Right ventricle myocardium superior (tissue), 1 donor: ENCODE measurements at regions of chr19 and their contacts with region 1.

Region 1: DNA sequence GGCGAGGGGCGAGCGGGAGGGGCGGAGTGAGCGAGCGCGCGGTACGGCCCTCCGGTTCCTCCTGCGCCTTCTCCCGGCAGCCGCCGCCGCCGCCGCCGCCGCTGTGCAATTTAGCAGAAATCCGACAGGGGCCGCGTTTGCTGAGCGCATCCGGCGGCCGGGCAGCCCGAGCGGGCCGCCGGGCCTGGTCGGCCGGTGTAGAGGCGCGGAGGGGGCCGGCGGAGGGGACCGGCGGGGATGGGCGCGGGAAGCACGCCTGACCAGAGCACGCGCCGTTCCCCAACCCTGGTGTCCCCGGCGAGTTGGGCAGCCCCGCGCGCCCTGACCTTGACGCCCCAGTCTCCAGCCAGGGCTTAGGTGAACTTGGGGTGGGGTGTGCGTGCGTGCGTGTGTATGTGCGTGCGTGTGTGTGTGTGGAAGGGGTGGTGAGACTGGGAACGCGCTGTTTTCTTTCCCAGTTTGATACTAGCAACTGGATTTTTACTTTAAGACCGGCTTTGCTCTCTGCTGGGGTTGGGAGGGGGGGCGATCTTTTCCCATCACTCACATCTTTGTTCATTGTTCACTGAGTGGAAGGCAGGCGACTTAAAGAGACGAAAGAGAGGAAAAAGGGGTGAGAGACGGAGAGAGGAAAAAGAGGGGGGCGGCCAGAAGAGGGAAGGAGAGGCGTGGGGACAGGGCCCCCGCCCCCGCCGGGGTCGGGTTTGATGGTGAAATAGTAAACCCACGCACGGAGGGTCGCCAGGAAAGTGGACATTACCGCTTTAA is 144.3 kb upstream of the ZNF536 start:
- DNase-seq: peak; percentile 75
- ATAC-seq: peak; percentile 77

Region 2: DNA sequence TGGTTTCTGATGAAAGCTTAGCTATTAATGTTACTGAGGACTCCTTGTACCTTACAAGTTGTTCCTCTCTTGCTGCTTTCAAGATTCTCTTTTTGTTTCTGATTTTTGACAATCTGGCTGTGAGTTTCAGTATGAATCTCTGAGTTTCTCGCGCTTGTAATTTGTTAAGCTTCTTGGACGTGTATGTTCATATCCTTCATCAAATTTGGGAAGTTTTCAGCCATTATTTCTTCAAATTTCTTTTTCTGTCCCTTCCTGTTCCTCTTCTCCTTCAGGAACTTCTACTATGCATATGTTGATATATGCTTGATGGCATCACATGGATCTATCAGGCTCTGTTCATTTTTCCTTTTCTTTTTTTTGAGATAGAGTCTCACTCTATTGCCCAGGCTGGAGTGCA is 291.4 kb before region 1 on chr19:
- intact Hi-C with region 1: no loop called
- DNase-seq: no peak
- ATAC-seq: no peak

Region 3: DNA sequence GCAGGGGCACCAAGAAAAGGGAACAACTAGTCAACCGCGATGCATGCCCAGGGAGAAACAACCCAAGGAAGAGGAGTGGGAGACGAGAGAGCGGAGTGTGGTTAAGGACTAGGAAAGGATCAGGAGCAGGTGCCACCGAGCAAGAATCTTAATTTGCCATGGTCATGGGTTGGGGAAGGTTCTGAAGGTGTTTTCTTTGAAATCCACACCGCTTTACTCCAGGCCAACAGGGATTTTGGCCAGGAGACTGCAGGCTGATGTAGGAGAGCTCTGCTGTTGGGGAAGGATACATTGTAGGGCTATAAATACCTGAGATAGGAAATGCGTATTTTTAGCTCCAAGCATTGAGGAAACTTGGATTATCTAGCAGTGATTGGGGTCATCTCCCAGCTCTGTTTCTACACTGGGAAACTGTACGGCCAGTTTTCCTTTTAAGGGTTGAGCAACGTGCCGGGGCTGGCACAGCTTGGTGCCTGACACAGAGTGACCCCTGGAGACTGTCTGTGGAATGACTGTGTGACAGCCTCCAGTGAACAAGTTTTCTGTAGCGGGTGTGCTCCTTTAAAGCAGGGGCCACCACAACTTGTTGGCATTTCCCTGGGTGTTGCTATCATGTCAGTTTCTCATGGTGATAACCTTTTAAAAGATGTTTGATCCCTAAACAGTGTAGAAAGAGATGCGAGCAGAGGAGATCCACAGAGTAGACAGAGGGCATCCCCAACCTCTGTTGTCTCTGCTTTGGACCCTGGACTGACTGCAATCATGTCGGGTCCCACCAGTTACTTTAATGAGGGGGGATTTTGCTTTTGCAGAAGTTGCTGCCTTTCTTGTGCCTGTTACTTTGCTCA is 178.6 kb after region 1 on chr19:
- intact Hi-C with region 1: loop called (anchors 5 kb)
- DNase-seq: peak; percentile 58
- ATAC-seq: peak; percentile 96

Region 4: DNA sequence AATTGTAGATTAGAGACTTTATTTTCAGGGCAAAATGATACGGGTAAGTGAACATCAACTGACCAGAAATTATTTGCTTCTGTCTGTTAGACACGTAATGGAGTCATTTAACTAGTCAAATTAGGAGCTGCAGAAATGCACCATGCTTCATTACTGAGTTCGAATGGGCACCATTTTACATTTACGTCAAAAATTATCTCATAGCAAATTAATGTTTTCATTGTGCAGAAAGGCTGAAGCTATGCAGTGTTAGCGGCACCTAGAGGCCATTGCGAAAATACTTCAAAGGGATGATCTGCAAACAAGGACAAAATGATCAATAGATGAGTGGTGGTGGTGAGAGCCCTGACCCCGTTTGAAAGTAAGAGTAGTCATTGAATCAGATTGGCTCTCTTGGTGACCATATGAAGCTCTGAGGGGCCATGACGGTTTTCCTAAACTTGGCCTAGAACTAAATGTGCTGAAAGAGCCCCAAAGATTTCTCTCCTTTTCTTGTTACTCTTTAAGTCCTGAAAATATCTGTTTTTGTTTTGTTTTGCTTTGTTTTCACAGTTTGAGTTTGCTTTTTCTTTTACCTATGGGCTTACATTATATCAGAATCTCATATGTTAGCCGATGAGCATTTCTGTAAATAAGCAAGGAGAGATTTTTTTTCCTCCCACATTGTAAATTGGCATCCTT is 422.2 kb after region 1 on chr19:
- intact Hi-C with region 1: loop called (anchors 10 kb)
- DNase-seq: no peak
- ATAC-seq: peak; percentile 45